Lower leg skin (tissue), 4 donors: ENCODE measurements at regions of chr2 and their contacts with region 1.

Region 1: DNA sequence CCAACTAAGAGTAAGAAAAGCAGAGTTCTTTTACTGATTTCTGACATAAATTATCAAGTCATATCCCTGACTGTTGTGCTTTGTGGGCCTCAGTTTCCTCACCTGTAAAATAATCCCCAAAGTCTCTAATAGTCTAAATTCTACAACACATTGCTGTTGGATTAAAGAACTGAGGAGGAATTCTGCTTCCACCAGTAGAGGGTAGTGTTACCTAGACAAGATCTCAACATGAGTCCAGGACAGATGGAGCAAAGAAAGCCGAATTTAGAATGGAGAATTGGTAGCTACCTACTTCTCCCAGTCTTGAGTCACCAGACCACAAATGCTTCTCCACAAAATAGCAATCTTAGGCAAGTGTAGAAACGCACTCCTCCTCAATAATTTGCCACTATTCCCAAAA is 462.5 kb upstream of the FSHR start:
- DNase-seq: no peak
- H3K4me3 ChIP-seq: no peak overlapping the region
- CTCF ChIP-seq: no peak
- POLR2A ChIP-seq: no peak

Region 2: DNA sequence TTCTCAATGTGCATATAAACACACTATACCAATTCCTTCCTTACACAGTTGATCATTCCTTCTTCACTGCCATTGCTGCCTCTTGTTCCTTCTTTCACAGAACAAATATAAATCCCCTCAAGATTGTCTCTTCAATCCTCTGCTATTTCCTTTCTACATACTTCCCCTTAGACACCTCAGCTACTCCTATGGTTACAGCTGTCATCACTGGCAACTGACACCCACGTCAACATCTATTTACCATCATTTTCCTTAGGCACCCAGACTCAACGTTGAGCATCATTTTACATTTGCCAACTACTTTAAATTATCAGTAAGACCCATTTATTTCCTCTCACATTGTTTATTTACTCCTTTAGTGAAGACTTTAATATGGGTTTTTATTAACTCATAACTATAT is 26.3 kb after region 1 on chr2:
- intact Hi-C with region 1: no loop called
- DNase-seq: no peak
- H3K4me3 ChIP-seq: no peak overlapping the region
- CTCF ChIP-seq: no peak
- POLR2A ChIP-seq: no peak

Region 3: DNA sequence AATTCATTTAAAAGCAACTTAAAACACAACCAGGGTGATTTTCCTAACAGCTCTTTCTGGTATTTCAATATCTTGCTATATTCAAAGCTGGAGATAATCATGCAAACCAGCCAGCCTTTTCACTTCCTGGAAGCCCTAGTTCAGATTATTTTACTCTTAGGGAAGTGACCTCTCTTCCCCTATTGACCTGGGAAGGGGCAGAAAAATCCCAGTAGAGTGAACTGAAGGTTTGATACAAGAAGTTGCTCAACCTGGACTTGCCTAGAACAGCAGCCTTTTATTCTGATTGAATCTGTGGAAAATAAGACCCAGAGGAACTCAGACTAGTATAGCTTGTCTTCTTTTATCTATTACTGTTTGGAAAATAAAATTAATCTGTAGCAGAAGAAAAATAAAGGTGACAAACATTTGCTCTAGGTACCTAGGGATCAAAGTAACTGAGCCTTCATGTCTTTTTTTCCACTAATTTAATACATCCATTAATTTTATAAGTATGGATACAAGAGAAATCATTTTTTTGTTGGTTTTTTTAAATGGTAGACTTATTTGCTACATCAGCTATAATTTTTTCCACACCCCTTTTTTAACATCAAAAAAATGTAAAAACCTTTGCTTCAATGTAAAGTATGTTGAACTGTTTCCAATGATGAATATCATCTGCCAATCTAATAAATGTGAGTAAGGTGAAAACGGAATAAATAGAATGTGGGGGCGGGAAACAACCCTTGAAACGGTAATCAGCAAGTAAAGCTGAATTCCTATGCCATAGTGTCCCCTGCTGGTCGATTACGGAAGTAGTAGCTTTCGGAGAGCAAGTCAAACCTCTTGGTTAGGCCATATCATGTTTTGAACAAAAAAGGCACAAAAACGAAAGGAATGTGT is 785.2 kb after region 1 on chr2:
- intact Hi-C with region 1: loop called (anchors 10 kb)
- DNase-seq: peak in 1 of 2 donors; percentile 33
- H3K4me3 ChIP-seq: no peak overlapping the region
- CTCF ChIP-seq: no peak
- POLR2A ChIP-seq: no peak

Region 4: DNA sequence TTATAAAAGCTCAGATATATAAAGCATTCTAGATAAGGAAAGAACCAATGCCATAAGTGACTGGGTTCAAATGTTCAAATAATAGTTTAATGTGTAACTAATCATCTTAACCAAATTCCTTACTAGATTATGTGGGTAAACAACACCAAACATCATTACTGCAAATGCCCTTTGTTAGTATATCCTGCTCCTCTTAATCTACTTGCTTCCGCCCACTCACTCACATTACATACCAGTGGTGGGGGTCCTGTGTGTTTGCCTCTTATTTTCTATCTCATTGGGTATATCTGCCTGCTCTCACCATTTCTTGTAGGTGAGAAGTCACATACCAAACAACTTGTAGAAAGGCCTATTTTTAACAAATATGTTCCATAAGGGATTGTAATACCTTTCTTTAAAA is 853.0 kb after region 1 on chr2:
- intact Hi-C with region 1: loop called (anchors 5 kb)
- DNase-seq: no peak
- H3K4me3 ChIP-seq: no peak overlapping the region
- CTCF ChIP-seq: no peak
- POLR2A ChIP-seq: no peak